AG04449 (cell line): ENCODE measurements at regions of chr14 and their contacts with region 1.

Region 1: GRCh38 chr14:67166450-67166853 is 22.8 kb upstream of the GARIN2 start:
- DNase-seq: no peak
- H3K4me3 ChIP-seq: no peak overlapping the region
- CTCF ChIP-seq: peak; percentile 61

Region 2: GRCh38 chr14:67151131-67151569 is 15.3 kb before region 1 on chr14:
- CTCF ChIA-PET with region 1: interaction called, 17 read pairs
- POLR2A ChIA-PET with region 1: no interaction called
- DNase-seq: no peak
- H3K4me3 ChIP-seq: no peak overlapping the region
- CTCF ChIP-seq: no peak

Region 3: GRCh38 chr14:67251573-67252226 is 85.2 kb after region 1 on chr14:
- CTCF ChIA-PET with region 1: interaction called, 16 read pairs
- POLR2A ChIA-PET with region 1: no interaction called
- DNase-seq: no peak
- H3K4me3 ChIP-seq: no peak overlapping the region
- CTCF ChIP-seq: no peak

Region 4: GRCh38 chr14:67276131-67276530 is 109.7 kb after region 1 on chr14:
- CTCF ChIA-PET with region 1: interaction called, 242 read pairs
- POLR2A ChIA-PET with region 1: no interaction called
- DNase-seq: no peak
- H3K4me3 ChIP-seq: no peak overlapping the region
- CTCF ChIP-seq: no peak

Region 5: GRCh38 chr14:67285876-67286452 is 119.5 kb after region 1 on chr14:
- CTCF ChIA-PET with region 1: interaction called, 242 read pairs
- POLR2A ChIA-PET with region 1: interaction called, 3 read pairs
- DNase-seq: no peak
- H3K4me3 ChIP-seq: no peak overlapping the region
- CTCF ChIP-seq: no peak

Region 6: DNA sequence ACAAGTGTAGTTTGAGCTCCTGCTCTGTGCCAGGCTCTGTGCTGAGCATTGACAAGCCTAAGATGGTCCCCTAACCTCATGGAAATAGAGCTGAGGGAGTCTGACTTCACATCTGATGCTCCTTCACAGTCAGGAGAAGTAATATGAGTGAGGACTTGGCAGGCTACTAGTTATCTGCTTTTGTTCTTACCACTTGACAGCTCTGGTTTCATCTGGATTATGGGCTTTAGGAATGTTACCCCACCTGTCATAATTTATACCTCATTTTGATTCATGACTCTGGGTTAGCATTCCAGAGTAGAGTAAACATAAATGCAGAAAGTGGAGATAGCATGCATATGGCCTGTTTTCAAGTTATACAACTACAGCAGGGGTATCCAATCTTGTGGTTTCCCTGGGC is 152.7 kb after region 1 on chr14:
- CTCF ChIA-PET with region 1: interaction called, 15 read pairs
- POLR2A ChIA-PET with region 1: no interaction called
- DNase-seq: no peak
- H3K4me3 ChIP-seq: no peak overlapping the region
- CTCF ChIP-seq: no peak

Region 7: DNA sequence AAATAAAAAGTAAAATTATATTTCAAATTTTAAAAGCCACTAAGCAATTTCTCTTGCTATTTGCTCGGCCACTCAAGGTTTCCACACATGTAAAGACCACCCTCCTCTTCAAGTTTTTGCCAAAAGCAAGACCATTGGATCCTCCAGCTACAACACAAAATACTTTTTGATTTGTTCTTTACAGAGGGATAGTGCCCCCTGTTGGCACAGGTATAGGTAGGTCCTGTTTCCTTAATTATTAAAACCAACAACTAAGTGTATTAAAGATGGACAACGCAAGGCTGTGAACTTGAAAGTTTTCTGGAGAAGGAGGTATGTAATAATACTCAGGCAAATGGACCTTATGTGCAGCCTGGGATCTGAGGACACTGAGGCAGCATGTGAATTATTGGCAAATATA is 169.3 kb after region 1 on chr14:
- CTCF ChIA-PET with region 1: interaction called, 10 read pairs
- POLR2A ChIA-PET with region 1: no interaction called
- DNase-seq: no peak
- H3K4me3 ChIP-seq: no peak overlapping the region
- CTCF ChIP-seq: no peak